ENCODE measurements at regions of chr3 and their contacts with region 1.

Region 1: GRCh38 chr3:129934234-129935123 is 40.0 kb upstream of the TRH start:
- DNase-seq: peak; percentile 26 to 28
- H3K4me3 ChIP-seq: no peak overlapping the region
- H3K27ac ChIP-seq: no peak overlapping the region
- H3K4me1 ChIP-seq: no peaks in the 10 kb centered on the region
- H3K27me3 ChIP-seq: no peaks in the 10 kb centered on the region
- CTCF ChIP-seq: peak; percentile 75 to 87 (median 84)
- POLR2A ChIP-seq: no peak

Region 2: DNA sequence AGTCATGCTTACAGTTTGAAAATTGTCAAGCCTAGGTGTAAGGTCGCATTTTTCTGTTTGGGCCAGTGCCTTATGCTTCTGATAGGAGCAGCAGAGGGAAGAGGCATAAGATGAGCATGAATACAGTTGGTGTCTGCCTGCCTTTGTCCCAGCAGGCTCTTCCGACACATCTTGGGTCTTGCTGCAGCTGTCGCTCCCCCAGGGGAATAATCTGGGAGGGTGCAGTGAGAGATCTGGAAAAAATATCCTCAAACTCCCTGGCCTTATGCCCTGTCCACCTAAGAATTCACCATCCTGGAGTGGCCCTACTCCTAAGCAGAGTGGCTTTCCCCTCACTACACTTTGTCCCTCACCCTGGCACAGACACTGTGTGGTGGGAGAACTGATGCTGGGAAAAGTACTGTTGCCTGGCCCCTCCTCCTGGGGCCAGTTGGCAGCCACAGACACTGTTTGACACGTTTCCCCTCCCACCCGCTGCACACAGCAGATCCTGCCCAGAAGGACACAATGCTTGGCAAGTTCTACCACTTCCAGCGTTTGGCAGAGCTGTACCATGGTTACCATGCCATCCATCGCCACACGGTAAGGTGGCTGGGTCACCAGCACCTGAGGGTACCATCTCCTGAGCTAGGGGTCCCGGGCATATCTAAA is 427.2 kb before region 1 on chr3:
- intact Hi-C with region 1: loop called (anchors 10 kb)
- DNase-seq: peak; percentile 13 to 19
- H3K4me3 ChIP-seq: no peak overlapping the region
- H3K27ac ChIP-seq: no peak overlapping the region
- H3K4me1 ChIP-seq: peaks cover 0 to 16% of the 10 kb centered on the region in 2 donors
- H3K27me3 ChIP-seq: no peaks in the 10 kb centered on the region
- CTCF ChIP-seq: no peak
- POLR2A ChIP-seq: no peak

Region 3: DNA sequence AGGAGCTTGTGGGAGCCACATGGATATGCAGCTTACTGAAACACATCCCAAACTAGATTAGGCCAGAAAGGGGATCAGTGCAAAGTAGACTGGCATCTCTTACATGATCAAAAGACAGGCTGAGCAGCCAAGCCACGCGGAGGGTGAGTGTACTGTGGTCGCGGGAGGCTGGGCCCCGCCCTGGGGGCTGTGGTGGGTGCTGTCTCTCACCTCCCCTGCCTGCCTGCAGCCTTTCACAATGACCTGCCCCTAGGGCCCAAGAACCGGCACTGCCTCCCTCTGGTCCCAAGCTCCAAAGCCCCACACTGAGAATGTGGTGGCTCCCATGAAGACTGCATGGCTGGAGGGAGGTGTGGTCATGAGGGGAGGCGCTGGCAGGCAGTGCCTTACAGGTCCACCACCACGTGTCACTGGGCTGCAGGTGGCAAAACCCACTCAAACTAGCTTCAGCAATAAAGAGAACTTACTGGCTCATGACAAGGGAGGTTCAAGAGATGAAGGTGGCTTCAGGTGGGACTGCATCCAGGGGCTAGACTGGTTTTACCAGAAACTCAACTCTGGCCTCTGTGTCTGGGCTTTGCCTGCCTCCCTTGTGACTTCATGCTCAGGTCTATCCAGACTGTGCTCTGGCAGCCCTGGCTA is 300.6 kb before region 1 on chr3:
- intact Hi-C with region 1: loop called (anchors 5 kb)
- DNase-seq: no peak
- H3K4me3 ChIP-seq: no peak overlapping the region
- H3K27ac ChIP-seq: no peak overlapping the region
- H3K4me1 ChIP-seq: no peaks in the 10 kb centered on the region
- H3K27me3 ChIP-seq: no peaks in the 10 kb centered on the region
- CTCF ChIP-seq: no peak
- POLR2A ChIP-seq: no peak

Region 4: DNA sequence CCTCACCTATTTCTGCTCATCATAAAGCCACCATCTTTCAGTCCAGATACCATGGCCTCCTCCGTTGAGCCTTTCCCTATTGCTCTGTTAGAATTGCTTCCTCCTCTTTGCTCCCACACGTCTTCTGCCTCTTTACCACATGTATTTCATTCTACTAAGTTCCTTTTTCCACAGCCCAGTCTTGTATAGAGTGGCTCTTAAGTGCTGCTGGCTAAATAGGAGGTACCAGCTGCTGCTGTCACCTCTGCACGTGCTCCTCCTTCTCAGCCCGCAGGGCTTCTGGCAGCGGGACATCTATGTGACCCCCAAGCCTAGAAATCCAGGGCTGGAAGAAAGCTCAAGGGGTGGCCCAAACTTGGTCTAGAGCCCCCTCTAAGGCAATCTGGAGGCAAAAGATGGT is 289.2 kb before region 1 on chr3:
- intact Hi-C with region 1: no loop called
- DNase-seq: no peak
- H3K4me3 ChIP-seq: no peak overlapping the region
- H3K27ac ChIP-seq: no peak overlapping the region
- H3K4me1 ChIP-seq: peaks cover 17 to 18% of the 10 kb centered on the region in 2 donors
- H3K27me3 ChIP-seq: no peaks in the 10 kb centered on the region
- CTCF ChIP-seq: no peak
- POLR2A ChIP-seq: no peak

Measured in thyroid gland (tissue), 4 donors.